H1 (cell line): ENCODE measurements at regions of chr3 and their contacts with region 1.

Region 1: DNA sequence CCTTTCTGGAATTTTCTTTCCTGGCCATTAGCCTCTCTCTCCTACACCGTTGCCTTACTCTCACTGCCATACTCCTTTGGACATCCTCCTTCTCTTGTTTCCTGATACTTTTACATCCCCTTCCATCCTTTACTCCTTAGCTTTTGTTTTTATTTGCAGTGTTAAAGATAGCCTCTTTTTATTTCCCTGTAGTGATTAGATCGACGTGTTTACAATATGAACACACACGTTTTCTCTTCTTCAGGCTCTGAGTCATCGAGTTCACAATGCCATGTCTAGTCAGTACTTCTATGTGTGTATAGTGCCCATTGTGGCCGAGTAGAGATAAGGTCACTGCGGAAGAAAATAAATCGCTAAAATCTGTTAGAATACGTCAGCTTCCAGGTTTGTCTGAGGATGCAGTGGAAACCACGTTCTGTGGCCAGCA is 208.5 kb downstream of the LPP start:
- DNase-seq: no peak
- H3K4me3 ChIP-seq: no peak overlapping the region
- H3K27ac ChIP-seq: no peak overlapping the region
- H3K4me1 ChIP-seq: peaks cover 0 to 3% (median 1%) of the 10 kb centered on the region in 4 experiments; a peak in 2 of 7 replicates
- H3K27me3 ChIP-seq: no peaks in the 10 kb centered on the region
- CTCF ChIP-seq: no peak
- EP300 ChIP-seq: no peak
- POLR2A ChIP-seq: no peak
- RAD21 ChIP-seq: no peak

Region 2: DNA sequence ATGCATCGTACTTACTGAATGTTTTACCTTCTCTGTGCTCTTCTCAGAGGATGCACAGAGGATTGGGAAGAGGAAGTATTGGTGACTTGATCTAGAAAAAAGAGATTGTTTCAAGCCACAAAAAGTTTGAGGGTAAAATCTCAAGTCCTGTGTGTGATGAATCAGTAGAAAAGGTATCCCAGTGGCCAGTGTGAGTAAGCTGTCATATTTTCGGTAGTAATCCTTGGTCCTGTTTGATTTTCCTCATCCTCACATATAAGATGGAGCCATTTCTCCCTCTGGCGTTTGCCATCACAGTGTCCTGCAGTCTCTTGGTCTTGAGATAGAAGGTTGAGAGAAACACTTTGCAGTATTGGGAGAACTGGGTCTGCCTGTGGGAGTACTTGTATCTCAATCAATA is 41.7 kb before region 1 on chr3:
- CTCF ChIA-PET with region 1: no interaction called
- POLR2A ChIA-PET with region 1: no interaction called
- DNase-seq: no peak
- H3K4me3 ChIP-seq: no peak overlapping the region
- H3K27ac ChIP-seq: no peak overlapping the region
- H3K4me1 ChIP-seq: no peaks in the 10 kb centered on the region
- H3K27me3 ChIP-seq: no peaks in the 10 kb centered on the region
- CTCF ChIP-seq: no peak
- EP300 ChIP-seq: no peak
- POLR2A ChIP-seq: no peak
- RAD21 ChIP-seq: no peak

Region 3: DNA sequence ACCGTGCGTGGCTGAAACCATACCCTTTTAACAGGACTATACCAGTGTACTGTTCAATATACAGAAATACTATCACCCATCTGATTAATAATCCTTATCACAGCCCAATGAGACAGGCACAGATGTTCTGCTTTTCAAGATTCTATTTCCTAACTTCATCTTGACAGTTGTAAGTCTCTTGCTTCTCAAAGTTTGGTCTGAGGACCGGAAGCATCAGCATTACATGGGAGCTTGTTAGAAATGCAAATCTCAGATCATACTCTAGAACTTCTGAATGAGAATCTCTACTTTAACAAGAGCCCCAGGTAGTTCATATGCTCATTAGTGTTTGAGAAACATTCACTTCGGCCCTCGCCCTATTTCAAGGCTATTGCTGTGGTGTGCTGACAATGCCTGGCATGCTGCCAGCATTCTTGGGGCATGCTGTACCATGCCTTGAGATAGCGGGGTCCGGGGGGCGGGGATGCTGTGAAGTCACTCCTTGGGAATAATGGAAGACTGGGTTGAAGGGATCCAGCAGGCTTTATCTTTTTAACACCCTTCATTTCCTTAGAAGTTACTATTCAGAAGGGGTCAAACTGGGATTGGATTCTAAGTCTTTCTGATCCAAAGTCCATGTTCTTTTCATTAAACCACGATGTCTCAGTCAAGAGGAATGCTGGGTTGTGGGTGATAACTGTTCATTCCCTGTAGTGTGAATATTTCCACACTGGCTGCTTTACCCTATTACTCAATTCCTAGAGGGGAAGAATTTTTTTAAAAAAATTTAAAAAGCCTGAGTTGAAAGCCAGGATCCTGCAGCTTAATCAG is 13.8 kb before region 1 on chr3:
- CTCF ChIA-PET with region 1: interaction called, 12 read pairs
- POLR2A ChIA-PET with region 1: no interaction called
- DNase-seq: no peak
- H3K4me3 ChIP-seq: no peak overlapping the region
- H3K27ac ChIP-seq: no peak overlapping the region
- H3K4me1 ChIP-seq: no peaks in the 10 kb centered on the region
- H3K27me3 ChIP-seq: no peaks in the 10 kb centered on the region
- CTCF ChIP-seq: no peak
- EP300 ChIP-seq: no peak
- POLR2A ChIP-seq: no peak
- RAD21 ChIP-seq: no peak

Region 4: GRCh38 chr3:188497021-188497420 is 134.6 kb after region 1 on chr3:
- CTCF ChIA-PET with region 1: no interaction called
- POLR2A ChIA-PET with region 1: no interaction called
- DNase-seq: no peak
- H3K4me3 ChIP-seq: no peak overlapping the region
- H3K27ac ChIP-seq: no peak overlapping the region
- H3K4me1 ChIP-seq: no peaks in the 10 kb centered on the region
- H3K27me3 ChIP-seq: no peaks in the 10 kb centered on the region
- CTCF ChIP-seq: no peak
- EP300 ChIP-seq: no peak
- POLR2A ChIP-seq: no peak
- RAD21 ChIP-seq: no peak

Region 5: GRCh38 chr3:188607805-188608315 is 245.4 kb after region 1 on chr3:
- CTCF ChIA-PET with region 1: no interaction called
- POLR2A ChIA-PET with region 1: no interaction called
- DNase-seq: no peak
- H3K4me3 ChIP-seq: no peak overlapping the region
- H3K27ac ChIP-seq: no peak overlapping the region
- H3K4me1 ChIP-seq: no peaks in the 10 kb centered on the region
- H3K27me3 ChIP-seq: no peaks in the 10 kb centered on the region
- CTCF ChIP-seq: no peak
- EP300 ChIP-seq: no peak
- POLR2A ChIP-seq: no peak
- RAD21 ChIP-seq: no peak